HEK293 (cell line): ENCODE measurements at regions of chr19 and their contacts with region 1.

Region 1: DNA sequence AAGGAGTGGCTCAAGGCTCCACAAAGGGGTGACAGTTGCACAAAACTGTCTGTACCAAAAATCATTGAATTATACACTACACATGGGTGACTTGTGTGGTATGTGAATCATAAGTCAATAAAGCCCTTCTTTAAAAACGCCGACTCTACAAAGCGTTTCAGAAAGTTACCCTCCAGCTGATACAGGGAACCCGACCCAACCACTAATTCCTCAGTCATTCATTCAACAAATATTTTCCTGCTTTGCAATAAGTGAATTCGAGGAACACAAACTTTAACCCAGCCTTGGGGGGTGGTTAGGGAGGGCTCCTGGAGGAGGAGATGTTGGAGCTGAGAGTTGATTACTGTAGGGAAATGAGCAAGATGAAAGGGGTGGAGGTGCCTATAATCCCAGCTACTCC is 32.0 kb downstream of the LTBP4 start:
- H3K4me3 ChIP-seq: no peak overlapping the region
- H3K27ac ChIP-seq: no peak overlapping the region
- H3K4me1 ChIP-seq: no peaks in the 10 kb centered on the region
- CTCF ChIP-seq: no peak

Region 2: GRCh38 chr19:40465557-40466150 is 167.6 kb before region 1 on chr19 and contains the start of gene BLVRB:
- CTCF ChIA-PET with region 1: interaction called, 48 read pairs
- POLR2A ChIA-PET with region 1: no interaction called
- H3K4me3 ChIP-seq: peak within 1 kb of the TSS; percentile 53
- H3K27ac ChIP-seq: peak within 1 kb of the TSS; percentile 20; the same call in 1 of the 2 replicates
- H3K4me1 ChIP-seq: peaks cover 13% of the 10 kb centered on the region
- CTCF ChIP-seq: no peak

Region 3: GRCh38 chr19:40523322-40524047 is 109.7 kb before region 1 on chr19:
- CTCF ChIA-PET with region 1: interaction called, 38 read pairs
- POLR2A ChIA-PET with region 1: interaction called, 7 read pairs
- H3K4me3 ChIP-seq: no peak overlapping the region; the same call in 1 of the 2 replicates
- H3K27ac ChIP-seq: peak overlapping the region; percentile 47; the same call in 1 of the 2 replicates
- H3K4me1 ChIP-seq: peaks cover 9% of the 10 kb centered on the region
- CTCF ChIP-seq: peak; percentile 99

Region 4: DNA sequence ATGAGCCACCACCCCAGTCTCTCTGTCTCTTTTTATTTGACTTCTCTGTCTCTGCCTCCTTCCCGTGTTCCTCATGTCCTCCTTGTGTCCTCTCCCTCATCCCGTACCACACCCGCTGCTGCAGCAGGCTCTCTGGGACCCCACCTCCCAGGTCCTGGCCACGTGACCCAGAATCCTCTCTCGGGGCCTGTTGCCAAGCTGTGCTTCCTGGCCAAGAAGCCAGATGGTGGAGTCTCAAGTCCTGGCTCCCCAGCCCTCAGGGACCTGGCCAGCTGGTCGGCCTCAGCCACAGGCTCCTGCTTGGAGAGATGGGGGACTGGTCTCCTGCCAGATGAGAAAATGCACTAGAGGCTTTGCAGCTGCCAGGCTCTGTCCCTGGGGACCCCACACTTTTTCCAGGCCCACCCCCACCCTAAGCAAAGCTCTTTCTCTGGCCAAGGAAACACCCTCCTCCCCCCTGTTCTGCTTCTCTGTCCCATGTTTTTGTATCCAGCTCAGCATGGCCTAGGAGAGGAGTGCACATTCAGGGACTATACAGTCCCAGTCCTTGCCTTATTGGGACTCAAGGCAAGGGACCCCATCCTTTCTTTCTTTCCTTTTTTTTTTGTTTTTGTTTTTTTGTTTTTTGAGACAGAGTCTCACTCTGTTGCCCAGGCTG is 90.9 kb before region 1 on chr19:
- CTCF ChIA-PET with region 1: interaction called, 140 read pairs
- POLR2A ChIA-PET with region 1: no interaction called
- H3K4me3 ChIP-seq: no peak overlapping the region
- H3K27ac ChIP-seq: no peak overlapping the region
- H3K4me1 ChIP-seq: peaks cover 4% of the 10 kb centered on the region; the same call in 1 of the 2 replicates
- CTCF ChIP-seq: no peak

Region 5: GRCh38 chr19:40570313-40571004 is 62.7 kb before region 1 on chr19:
- CTCF ChIA-PET with region 1: interaction called, 65 read pairs
- POLR2A ChIA-PET with region 1: no interaction called
- H3K4me3 ChIP-seq: peak overlapping the region; percentile 35
- H3K27ac ChIP-seq: peak overlapping the region; percentile 73
- H3K4me1 ChIP-seq: peaks cover 16% of the 10 kb centered on the region
- CTCF ChIP-seq: peak; percentile 99

Region 6: DNA sequence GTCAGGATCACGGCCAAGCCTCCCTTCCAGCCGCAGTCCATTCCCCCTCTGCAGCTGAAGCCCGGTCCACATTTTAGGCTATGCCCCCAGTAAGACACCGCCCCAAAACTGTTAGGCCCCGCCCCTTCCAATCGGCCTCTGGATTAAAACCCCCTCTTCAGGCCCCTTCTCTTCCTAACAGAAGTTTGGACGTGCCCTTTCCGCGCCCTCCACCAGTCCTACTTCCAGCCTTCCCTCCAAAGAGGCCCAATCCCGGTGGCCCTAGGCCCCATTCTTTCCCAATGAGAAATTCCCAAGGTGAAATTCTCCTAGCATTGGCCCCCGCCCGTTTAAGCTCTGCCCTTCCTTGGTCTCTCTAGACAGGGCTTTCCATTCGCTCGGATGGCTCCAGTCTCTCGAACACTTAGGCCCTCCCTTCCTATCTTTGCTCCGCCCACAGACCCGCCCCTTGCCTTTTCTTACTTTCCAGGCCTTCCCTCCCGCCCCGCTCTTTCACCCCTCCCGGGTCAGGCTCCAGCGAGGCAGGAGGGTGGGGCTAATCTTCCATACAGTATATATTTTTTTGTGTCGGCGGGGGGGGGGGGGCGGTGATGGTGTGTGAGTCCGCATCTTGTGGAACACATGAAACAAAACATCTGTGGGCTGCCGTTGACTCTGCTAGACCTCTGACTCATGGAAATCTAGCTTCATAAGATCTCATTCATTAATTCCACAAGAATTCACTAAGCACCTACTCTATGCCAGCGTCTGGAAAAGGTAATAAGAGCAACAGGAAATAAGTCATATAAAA is 18.4 kb before region 1 on chr19:
- CTCF ChIA-PET with region 1: interaction called, 470 read pairs
- POLR2A ChIA-PET with region 1: interaction called, 4 read pairs
- H3K4me3 ChIP-seq: no peak overlapping the region
- H3K27ac ChIP-seq: peak overlapping the region; percentile 27
- H3K4me1 ChIP-seq: peaks cover 13% of the 10 kb centered on the region
- CTCF ChIP-seq: no peak

Region 7: DNA sequence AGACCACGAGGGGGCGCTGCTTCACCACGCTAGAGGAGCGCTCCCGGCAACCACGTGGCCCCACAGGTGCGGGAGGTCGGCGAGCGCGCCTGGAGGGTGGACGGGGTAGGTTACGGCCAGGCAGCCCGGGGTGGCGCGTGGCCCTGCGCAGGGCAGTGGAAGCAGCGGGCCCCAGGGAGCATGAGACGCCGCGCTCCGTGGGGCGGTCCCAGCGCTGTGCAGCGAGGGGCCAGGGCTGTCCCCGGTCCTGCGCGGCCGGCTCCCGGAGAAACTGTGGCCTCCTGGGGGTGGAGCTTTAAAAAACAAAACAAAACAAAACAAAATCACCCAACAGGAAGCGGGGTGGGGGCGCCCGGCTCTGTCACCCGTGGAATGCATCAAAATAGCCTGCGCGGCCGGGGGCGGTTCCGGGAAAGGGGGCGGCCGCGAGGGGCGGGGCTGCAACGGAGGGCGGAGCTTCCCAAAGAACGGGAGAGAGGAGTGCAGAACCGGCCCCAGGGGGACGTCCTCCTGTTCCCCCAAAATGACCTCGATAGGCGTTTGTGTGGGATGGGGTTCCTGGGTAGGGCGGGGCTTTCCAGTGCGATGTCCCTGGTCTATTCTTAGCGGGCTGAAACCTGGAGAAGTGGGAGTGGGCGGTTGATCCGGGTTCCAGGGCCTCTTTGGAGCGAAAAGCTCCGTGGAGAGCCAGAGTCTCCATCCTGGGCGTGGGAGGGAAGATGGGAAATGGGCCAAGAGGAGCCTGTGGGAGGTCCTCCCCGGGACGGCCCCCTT is 29.9 kb after region 1 on chr19:
- CTCF ChIA-PET with region 1: interaction called, 49 read pairs
- POLR2A ChIA-PET with region 1: no interaction called
- H3K4me3 ChIP-seq: peak overlapping the region; percentile 56
- H3K27ac ChIP-seq: peak overlapping the region; percentile 89; the same call in 1 of the 2 replicates
- H3K4me1 ChIP-seq: peaks cover 13% of the 10 kb centered on the region
- CTCF ChIP-seq: peak; percentile 100